A549 (cell line): ENCODE measurements at regions of chr17 and their contacts with region 1.

Region 1: GRCh38 chr17:59381716-59382570 is 50.5 kb downstream of the YPEL2 start:
- DNase-seq: no peak
- ATAC-seq: peak in 1 of 2 experiments; percentile 27; a peak in 2 of 6 replicates
- H3K4me3 ChIP-seq: no peak overlapping the region
- H3K27ac ChIP-seq: no peak overlapping the region
- H3K4me1 ChIP-seq: no peaks in the 10 kb centered on the region
- CTCF ChIP-seq: no peak
- EP300 ChIP-seq: no peak
- POLR2A ChIP-seq: no peak
- RAD21 ChIP-seq: no peak

Region 2: GRCh38 chr17:58936295-58936694 is 445.6 kb before region 1 on chr17:
- CTCF ChIA-PET with region 1: no interaction called
- POLR2A ChIA-PET with region 1: no interaction called
- DNase-seq: no peak
- ATAC-seq: no peak
- H3K4me3 ChIP-seq: no peak overlapping the region
- H3K27ac ChIP-seq: no peak overlapping the region
- H3K4me1 ChIP-seq: no peaks in the 10 kb centered on the region
- CTCF ChIP-seq: no peak
- EP300 ChIP-seq: no peak
- POLR2A ChIP-seq: no peak
- RAD21 ChIP-seq: no peak

Region 3: DNA sequence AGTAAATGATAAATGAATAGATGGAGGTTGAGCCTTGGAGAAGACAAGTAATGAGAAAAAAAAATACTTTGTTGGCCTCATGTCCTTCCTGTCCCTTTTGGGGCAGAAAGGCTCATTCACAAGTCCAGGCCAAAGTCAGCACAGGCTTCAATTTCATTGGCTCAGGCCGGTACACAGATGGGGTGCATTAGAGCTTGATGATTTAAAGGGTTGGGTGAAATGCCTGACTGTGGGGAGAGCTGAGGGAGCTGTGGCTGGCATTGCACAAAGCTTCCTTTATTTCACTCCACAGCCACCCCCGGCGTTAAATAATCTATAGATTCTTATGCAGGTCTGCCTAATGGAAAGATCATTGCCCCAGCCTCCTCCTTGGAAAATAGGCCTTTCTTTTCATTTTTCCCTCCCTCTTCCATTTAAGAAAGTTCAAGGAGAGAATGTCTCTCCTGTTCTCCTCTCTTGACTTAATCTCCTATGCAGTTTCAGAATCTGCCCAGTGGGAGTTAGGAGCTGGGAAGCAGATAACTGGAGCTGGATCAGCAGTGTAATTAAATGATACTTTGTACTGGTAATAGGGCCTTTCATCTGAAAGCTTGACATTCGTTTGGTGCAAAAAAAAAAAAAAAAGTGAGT is 26.1 kb before region 1 on chr17:
- CTCF ChIA-PET with region 1: no interaction called
- POLR2A ChIA-PET with region 1: no interaction called
- DNase-seq: no peak
- ATAC-seq: no peak
- H3K4me3 ChIP-seq: no peak overlapping the region
- H3K27ac ChIP-seq: no peak overlapping the region
- H3K4me1 ChIP-seq: no peaks in the 10 kb centered on the region
- CTCF ChIP-seq: no peak
- EP300 ChIP-seq: no peak
- POLR2A ChIP-seq: no peak
- RAD21 ChIP-seq: no peak

Region 4: DNA sequence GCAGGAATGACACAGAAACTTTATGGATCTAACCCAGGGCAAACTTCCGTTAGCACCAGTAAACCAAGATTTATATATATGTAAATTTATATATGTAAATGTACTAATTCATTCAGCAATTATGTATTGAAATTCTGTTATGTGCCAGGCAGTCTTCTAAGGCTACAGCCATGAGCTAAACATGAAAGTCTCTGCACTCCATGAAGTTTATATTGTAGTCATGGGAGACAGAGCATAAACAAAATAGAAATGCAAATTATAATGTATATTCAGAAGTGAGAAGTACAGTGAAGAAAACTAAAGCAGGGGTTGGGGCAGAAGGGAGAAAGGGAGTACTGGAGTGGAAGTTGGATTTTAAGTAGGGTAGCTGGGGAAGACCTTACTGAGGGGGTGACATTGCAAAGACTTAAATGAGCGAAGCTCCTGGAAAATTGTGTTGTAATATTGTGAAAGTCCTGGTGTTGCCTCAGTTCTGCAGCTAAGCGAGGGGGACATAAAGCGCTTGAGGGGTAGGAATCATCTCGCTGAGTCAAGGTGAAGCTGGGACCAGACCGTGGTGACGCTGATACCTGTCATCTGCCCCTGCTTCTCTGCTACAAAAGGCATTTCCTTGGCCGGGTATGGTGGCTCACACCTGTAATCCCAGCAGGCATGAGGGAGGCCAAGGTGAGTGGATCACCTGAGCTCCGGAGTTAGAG is 14.3 kb after region 1 on chr17:
- CTCF ChIA-PET with region 1: interaction called, 10 read pairs
- POLR2A ChIA-PET with region 1: no interaction called
- DNase-seq: no peak
- ATAC-seq: no peak
- H3K4me3 ChIP-seq: no peak overlapping the region
- H3K27ac ChIP-seq: no peak overlapping the region
- H3K4me1 ChIP-seq: peaks cover 8% of the 10 kb centered on the region
- CTCF ChIP-seq: no peak
- EP300 ChIP-seq: no peak
- POLR2A ChIP-seq: no peak
- RAD21 ChIP-seq: no peak

Region 5: GRCh38 chr17:59513934-59514841 is 132.2 kb after region 1 on chr17:
- CTCF ChIA-PET with region 1: no interaction called
- POLR2A ChIA-PET with region 1: no interaction called
- DNase-seq: peak; percentile 26 to 83
- ATAC-seq: peak; percentile 66 to 68; a peak in 5 of 6 replicates
- H3K4me3 ChIP-seq: no peak overlapping the region
- H3K27ac ChIP-seq: 0 out of 6 replicates have a peak overlapping the region, but pooled peaks of 1 of the 2 experiments have one; percentile 9
- H3K4me1 ChIP-seq: peaks cover 19% of the 10 kb centered on the region
- CTCF ChIP-seq: no peak
- EP300 ChIP-seq: no peak
- POLR2A ChIP-seq: no peak
- RAD21 ChIP-seq: no peak